ENCODE measurements at regions of chr10 and their contacts with region 1.

Region 1: DNA sequence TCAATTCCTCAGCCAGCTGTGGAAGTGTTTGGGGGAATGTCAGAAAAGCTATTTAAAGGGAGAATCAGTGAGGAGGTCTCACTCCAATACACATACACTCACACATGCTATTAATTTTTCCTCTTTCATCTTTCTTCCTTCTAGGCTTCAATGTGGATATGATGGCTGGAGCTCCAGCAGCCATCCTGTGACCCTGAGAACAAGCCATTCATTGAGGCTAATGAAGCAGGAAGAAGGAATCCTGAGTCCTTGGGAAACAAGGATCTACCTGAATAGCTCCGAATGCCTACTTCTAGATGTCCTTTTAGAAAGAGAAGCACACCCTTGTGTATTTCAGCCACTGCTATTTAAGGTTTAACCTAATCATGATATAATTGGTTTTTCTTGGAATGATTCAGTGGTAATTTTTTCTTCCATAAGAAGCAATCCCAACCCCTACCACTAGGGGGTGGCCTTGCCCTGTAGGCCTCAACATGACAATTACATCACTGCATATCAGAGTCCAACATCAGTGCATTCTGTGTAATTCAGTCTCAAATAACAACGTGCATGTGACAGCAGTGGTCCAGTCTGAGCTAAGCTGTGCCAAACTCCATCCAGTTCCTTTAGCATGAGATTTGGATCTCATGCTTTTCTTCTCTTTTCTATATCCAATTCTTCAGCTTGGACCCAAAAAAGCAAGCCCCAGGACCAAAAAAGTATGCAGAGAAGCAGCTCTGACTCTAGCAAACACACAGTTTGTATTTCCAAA is 85.3 kb upstream of the ANKRD1 start:
- DNase-seq: peak; percentile 45
- H3K4me3 Mint-ChIP-seq: no peak overlapping the region
- H3K27ac Mint-ChIP-seq: no peak overlapping the region
- H3K4me1 Mint-ChIP-seq: peaks cover 25% of the 10 kb centered on the region
- H3K27me3 Mint-ChIP-seq: peaks cover 27% of the 10 kb centered on the region

Region 2: DNA sequence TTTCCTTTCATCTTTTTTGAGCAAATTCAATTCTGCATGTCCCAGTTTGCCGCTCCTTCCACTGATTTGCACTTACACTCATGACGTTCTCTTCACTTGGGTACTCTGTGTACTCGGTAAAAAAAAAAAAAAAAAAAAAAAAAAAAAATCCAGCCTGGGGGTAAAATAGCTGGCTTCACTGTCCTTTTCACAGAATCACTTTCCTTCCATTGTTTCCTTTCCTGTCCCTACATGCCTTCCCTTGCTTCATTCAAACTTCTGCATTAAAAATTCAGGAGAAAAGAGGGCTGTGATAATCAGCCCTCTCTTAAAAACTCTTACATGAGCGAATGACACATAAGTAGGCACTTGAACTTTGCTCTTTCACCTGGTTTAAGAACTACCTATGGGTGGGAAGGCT is 94.0 kb before region 1 on chr10:
- intact Hi-C with region 1: loop called (anchors 2 kb)
- DNase-seq: no peak
- H3K4me3 Mint-ChIP-seq: no peak overlapping the region
- H3K27ac Mint-ChIP-seq: no peak overlapping the region
- H3K4me1 Mint-ChIP-seq: peaks cover 7% of the 10 kb centered on the region
- H3K27me3 Mint-ChIP-seq: peaks cover 4% of the 10 kb centered on the region

Region 3: GRCh38 chr10:91022924-91023699 is 16.9 kb after region 1 on chr10:
- intact Hi-C with region 1: no loop called
- DNase-seq: no peak
- H3K4me3 Mint-ChIP-seq: no peak overlapping the region
- H3K27ac Mint-ChIP-seq: no peak overlapping the region
- H3K4me1 Mint-ChIP-seq: no peaks in the 10 kb centered on the region
- H3K27me3 Mint-ChIP-seq: peaks cover 49% of the 10 kb centered on the region

Region 4: GRCh38 chr10:91034494-91035159 is 28.5 kb after region 1 on chr10:
- intact Hi-C with region 1: loop called (anchors 1 kb)
- DNase-seq: no peak
- H3K4me3 Mint-ChIP-seq: peak overlapping the region; percentile 18
- H3K27ac Mint-ChIP-seq: peak overlapping the region; percentile 82
- H3K4me1 Mint-ChIP-seq: peaks cover 14% of the 10 kb centered on the region
- H3K27me3 Mint-ChIP-seq: peaks cover 15% of the 10 kb centered on the region

Region 5: GRCh38 chr10:91163269-91163868 is 157.2 kb after region 1 on chr10:
- intact Hi-C with region 1: loop called (anchors 1 kb)
- DNase-seq: peak; percentile 70
- H3K4me3 Mint-ChIP-seq: peak overlapping the region; percentile 85
- H3K27ac Mint-ChIP-seq: peak overlapping the region; percentile 76
- H3K4me1 Mint-ChIP-seq: peaks cover 34% of the 10 kb centered on the region
- H3K27me3 Mint-ChIP-seq: no peaks in the 10 kb centered on the region

Region 6: GRCh38 chr10:91251430-91252056 is 245.4 kb after region 1 on chr10:
- intact Hi-C with region 1: loop called (anchors 1 kb)
- DNase-seq: peak; percentile 14
- H3K4me3 Mint-ChIP-seq: no peak overlapping the region
- H3K27ac Mint-ChIP-seq: no peak overlapping the region
- H3K4me1 Mint-ChIP-seq: peaks cover 3% of the 10 kb centered on the region
- H3K27me3 Mint-ChIP-seq: no peaks in the 10 kb centered on the region

Region 7: GRCh38 chr10:91287276-91287675 is 281.1 kb after region 1 on chr10:
- intact Hi-C with region 1: no loop called
- DNase-seq: no peak
- H3K4me3 Mint-ChIP-seq: no peak overlapping the region
- H3K27ac Mint-ChIP-seq: no peak overlapping the region
- H3K4me1 Mint-ChIP-seq: no peaks in the 10 kb centered on the region
- H3K27me3 Mint-ChIP-seq: peaks cover 4% of the 10 kb centered on the region

Region 8: DNA sequence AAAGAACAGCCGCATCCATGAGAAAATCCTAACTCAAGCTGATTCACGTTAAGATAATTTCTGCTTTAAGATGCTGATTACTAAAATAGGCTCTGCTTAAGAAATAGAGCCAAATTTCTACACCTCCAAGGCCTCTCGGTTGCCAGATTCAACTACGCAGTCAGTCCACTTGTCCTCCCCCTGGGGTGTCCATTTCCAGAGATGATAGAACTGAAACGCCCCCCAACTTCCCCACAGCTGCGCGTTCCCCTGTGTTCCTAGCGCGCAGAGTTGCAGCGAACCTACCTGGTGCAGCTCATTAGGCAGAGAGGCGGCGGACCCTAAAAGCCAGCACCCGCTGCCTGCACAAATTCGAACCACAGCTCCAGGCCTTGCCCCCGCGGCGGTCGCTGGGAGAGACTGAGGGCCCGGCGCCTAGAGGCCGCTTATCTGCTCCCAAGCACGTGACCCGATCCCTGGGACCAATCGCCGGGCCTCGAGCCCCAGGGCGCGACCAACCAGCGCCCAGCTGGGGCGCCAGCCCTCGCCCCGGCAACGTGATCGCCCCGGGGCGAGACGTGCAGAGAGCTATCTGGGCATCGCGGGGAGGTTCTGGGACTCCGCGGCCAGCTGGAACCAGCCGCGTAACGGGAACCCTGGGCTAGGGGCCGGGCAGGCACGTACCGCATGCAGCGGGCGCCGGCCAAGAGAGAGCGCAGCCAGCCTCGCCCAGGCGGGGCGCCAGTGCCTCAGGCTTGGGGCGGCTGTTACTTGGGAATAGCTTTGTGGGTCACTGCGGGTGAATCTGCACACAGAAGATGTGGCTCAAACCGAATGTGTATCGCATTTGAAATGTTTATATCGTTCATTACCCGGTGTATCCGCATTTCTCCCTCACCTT is 626.7 kb after region 1 on chr10 and contains the start of gene PPP1R3C:
- intact Hi-C with region 1: loop called (anchors 5 kb)
- DNase-seq: peak; percentile 41
- H3K4me3 Mint-ChIP-seq: peak within 1 kb of the TSS; percentile 72
- H3K27ac Mint-ChIP-seq: no peak within 1 kb of the TSS
- H3K4me1 Mint-ChIP-seq: peaks cover 6% of the 10 kb centered on the region
- H3K27me3 Mint-ChIP-seq: peaks cover 55% of the 10 kb centered on the region
- total RNA-seq, gene PPP1R3C: 0.14 and 0.21 TPM in 2 replicates